ENCODE measurements at regions of chr3 and their contacts with region 1.

Region 1: GRCh38 chr3:191244242-191244867 is 45.3 kb downstream of the OSTN start:
- DNase-seq: no peak
- ATAC-seq: no peak
- H3K4me3 ChIP-seq: no peak overlapping the region
- H3K27ac ChIP-seq: no peak overlapping the region
- H3K4me1 ChIP-seq: peaks cover 0 to 15% (median 3%) of the 10 kb centered on the region in 9 donors
- H3K27me3 ChIP-seq: no peaks in the 10 kb centered on the region
- CTCF ChIP-seq: peak in 8 of 9 donors; percentile 14 to 66 (median 53)

Region 2: GRCh38 chr3:191094057-191094845 is 150.1 kb before region 1 on chr3:
- intact Hi-C with region 1: no loop called
- DNase-seq: no peak
- ATAC-seq: peak in 1 of 8 donors; percentile 41
- H3K4me3 ChIP-seq: no peak overlapping the region
- H3K27ac ChIP-seq: no peak overlapping the region
- H3K4me1 ChIP-seq: no peaks in the 10 kb centered on the region
- H3K27me3 ChIP-seq: no peaks in the 10 kb centered on the region
- CTCF ChIP-seq: no peak

Region 3: GRCh38 chr3:191376516-191377141 is 132.3 kb after region 1 on chr3:
- intact Hi-C with region 1: loop called in 3 of 10 experiments (anchors 10 kb)
- DNase-seq: no peak
- ATAC-seq: peak in 7 of 8 donors; percentile 56 to 78 (median 65)
- H3K4me3 ChIP-seq: no peak overlapping the region
- H3K27ac ChIP-seq: peak overlapping the region in 8 of 10 donors; percentile 11 to 65 (median 36)
- H3K4me1 ChIP-seq: peaks cover 3 to 55% (median 43%) of the 10 kb centered on the region in 9 donors
- H3K27me3 ChIP-seq: no peaks in the 10 kb centered on the region
- CTCF ChIP-seq: no peak

Region 4: GRCh38 chr3:191388823-191389222 is 144.5 kb after region 1 on chr3:
- intact Hi-C with region 1: loop called in 5 of 10 experiments (anchors 5 to 10 kb)
- DNase-seq: no peak
- ATAC-seq: no peak
- H3K4me3 ChIP-seq: no peak overlapping the region
- H3K27ac ChIP-seq: no peak overlapping the region
- H3K4me1 ChIP-seq: peaks cover 0 to 9% (median 0%) of the 10 kb centered on the region in 9 donors
- H3K27me3 ChIP-seq: no peaks in the 10 kb centered on the region
- CTCF ChIP-seq: peak in 7 of 9 donors; percentile 21 to 53 (median 41)

Region 5: DNA sequence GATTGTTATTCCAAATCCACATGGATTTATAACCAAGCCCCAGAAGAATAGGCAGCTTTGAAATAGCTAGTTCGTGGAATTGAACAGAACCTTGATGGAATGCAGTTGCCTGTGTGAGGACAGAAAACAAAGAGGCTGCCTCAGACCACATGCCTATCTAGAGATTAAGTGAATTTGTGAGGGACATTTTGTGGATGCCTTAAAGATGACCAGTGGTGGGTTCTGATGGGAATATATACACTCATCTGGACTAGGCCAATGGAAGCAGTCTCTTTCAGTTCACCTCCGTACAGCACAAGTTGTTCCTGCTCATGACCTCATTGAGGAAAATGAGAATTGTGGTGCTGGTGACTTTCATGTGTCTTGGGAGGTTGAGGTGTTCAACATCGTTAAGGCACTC is 153.4 kb after region 1 on chr3:
- intact Hi-C with region 1: loop called in 4 of 10 experiments (anchors 5 to 10 kb)
- DNase-seq: no peak
- ATAC-seq: no peak
- H3K4me3 ChIP-seq: no peak overlapping the region
- H3K27ac ChIP-seq: no peak overlapping the region
- H3K4me1 ChIP-seq: peaks cover 0 to 6% (median 0%) of the 10 kb centered on the region in 9 donors
- H3K27me3 ChIP-seq: no peaks in the 10 kb centered on the region
- CTCF ChIP-seq: no peak